ENCODE measurements at regions of chr2 and their contacts with region 1.

Region 1: GRCh38 chr2:190534310-190535120 is at the start of gene NEMP2:
- DNase-seq: peak; percentile 95
- ATAC-seq: peak; percentile 94
- total RNA-seq, gene NEMP2: 3.5 TPM

Region 2: GRCh38 chr2:190408538-190409271 is 125.8 kb before region 1 on chr2:
- intact Hi-C with region 1: no loop called
- DNase-seq: peak; percentile 78
- ATAC-seq: peak; percentile 55

Region 3: GRCh38 chr2:190583507-190584337 is 49.2 kb after region 1 on chr2:
- intact Hi-C with region 1: loop called (anchors 5 kb)
- DNase-seq: peak; percentile 63
- ATAC-seq: peak; percentile 58

Region 4: DNA sequence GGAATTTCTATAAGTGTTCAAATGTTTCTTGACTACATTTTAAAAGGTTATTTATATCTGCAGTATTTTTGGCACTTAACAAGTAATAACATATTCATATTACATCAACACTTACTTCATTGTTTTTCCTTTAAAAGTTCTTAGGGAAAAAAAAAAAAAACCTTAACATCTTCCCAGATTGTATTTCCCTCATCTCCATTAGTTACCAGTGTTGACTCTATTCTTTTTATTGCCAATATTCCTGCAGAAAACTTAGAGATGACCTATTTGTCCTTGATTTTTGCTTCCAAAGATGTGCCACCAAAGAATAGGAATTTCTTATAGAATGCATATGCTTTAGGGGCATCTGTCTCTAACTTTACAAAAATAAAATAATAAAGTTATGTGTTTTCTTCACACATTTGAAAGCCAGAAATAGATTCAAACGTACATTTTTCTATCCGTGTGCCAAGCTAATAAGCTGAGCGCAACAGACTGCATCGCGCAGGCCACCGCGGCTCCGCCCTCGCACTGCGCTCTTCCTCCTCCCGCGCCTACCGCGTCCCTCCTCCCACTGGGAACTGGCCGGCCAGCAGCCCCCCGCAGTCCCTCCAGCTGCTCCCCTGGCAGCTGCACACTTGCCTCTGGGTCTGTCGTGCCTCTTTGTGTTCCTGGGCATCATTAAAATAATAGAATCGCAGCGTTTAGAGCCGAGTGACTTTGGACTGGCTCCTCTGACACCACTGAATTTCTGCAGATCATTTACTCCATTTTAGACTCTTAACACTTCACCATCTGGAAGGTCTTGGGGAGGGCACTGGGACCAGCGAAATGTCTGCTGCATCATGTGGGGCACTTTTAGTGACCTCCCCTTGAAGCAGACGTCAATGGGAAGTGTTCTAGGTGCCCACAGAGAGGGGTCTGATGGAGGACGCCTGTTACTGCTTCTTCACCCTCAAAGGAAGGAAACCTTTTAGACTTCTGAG is 93.2 kb after region 1 on chr2:
- intact Hi-C with region 1: loop called (anchors 1 kb)
- DNase-seq: no peak
- ATAC-seq: peak; percentile 78

Region 5: GRCh38 chr2:190648289-190649034 is 113.9 kb after region 1 on chr2:
- intact Hi-C with region 1: loop called (anchors 1 kb)
- DNase-seq: peak; percentile 96
- ATAC-seq: peak; percentile 96

Measured in Right ventricle myocardium inferior (tissue), 1 donor.